Naive thymus-derived CD4-positive, alpha-beta T cell (primary cell): ENCODE measurements at regions of chrX and their contacts with region 1.

Region 1: GRCh38 chrX:13653022-13653693 is at the start of gene TCEANC:
- DNase-seq: peak; percentile 77 to 96 (median 93)
- ATAC-seq: peak; percentile 97
- H3K4me3 ChIP-seq: peak within 1 kb of the TSS; percentile 93
- H3K4me3 Mint-ChIP-seq: peak within 1 kb of the TSS; percentile 79 to 96 (median 93)
- H3K27ac ChIP-seq: peak within 1 kb of the TSS; percentile 93
- H3K27ac Mint-ChIP-seq: peak within 1 kb of the TSS; percentile 91 to 98 (median 96)
- H3K4me1 ChIP-seq: peaks cover 15 to 16% of the 10 kb centered on the region in 2 donors
- H3K4me1 Mint-ChIP-seq: peaks cover 0 to 39% (median 24%) of the 10 kb centered on the region in 7 donors
- H3K27me3 ChIP-seq: no peaks in the 10 kb centered on the region
- H3K27me3 Mint-ChIP-seq: no peaks in the 10 kb centered on the region
- total RNA-seq, gene TCEANC: 5.0 to 17.5 (median 11.4) TPM

Region 2: GRCh38 chrX:12791257-12792228 is 861.6 kb before region 1 on chrX and contains the start of gene PRPS2:
- CTCF ChIA-PET with region 1: no interaction called
- POLR2A ChIA-PET with region 1: no interaction called
- intact Hi-C with region 1: loop called (anchors 2 to 5 kb)
- DNase-seq: peak; percentile 39 to 74 (median 69)
- ATAC-seq: peak; percentile 96
- H3K4me3 ChIP-seq: peak within 1 kb of the TSS; percentile 74
- H3K4me3 Mint-ChIP-seq: peak within 1 kb of the TSS; percentile 85 to 92 (median 88)
- H3K27ac ChIP-seq: peak within 1 kb of the TSS; percentile 73
- H3K27ac Mint-ChIP-seq: peak within 1 kb of the TSS; percentile 59 to 86 (median 81)
- H3K4me1 ChIP-seq: peaks cover 0 to 6% of the 10 kb centered on the region in 2 donors
- H3K4me1 Mint-ChIP-seq: peaks cover 8 to 44% (median 34%) of the 10 kb centered on the region in 7 donors
- H3K27me3 ChIP-seq: no peaks in the 10 kb centered on the region
- H3K27me3 Mint-ChIP-seq: peaks cover 0 to 16% (median 0%) of the 10 kb centered on the region in 5 donors
- total RNA-seq, gene PRPS2: 24.7 to 95.8 (median 32.0) TPM

Region 3: DNA sequence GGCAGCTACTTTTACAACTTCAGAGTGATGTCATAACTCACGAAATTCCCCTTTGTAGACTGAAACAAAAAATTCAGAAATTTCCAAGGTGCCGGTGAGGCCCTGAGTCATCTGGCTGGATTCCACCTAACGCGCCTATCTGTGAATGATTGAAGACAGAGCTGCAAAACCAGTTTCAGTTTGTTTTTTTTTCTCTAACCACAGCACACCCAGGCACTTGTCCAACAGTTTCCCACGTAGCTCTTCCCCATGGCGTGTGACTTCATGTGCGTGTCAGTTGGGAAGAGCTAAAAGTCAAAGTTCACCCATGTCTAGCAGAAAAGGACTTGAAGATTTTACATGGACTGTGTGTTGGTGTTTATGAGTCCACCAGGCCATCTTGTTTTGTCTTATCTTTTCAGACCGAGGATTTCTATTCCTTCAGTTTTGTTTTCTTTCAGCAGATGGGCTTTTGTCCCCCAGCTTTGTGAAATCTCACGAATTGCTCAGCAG is 16.1 kb after region 1 on chrX:
- CTCF ChIA-PET with region 1: no interaction called
- POLR2A ChIA-PET with region 1: interaction called, 3 read pairs
- intact Hi-C with region 1: loop called in 1 of 2 experiments (anchors 1 kb)
- DNase-seq: peak in 2 of 9 donors; percentile 36 to 62
- ATAC-seq: peak; percentile 90
- H3K4me3 ChIP-seq: no peak overlapping the region
- H3K4me3 Mint-ChIP-seq: peak overlapping the region in 3 of 10 donors; percentile 16 to 46 (median 30)
- H3K27ac ChIP-seq: no peak overlapping the region
- H3K27ac Mint-ChIP-seq: peak overlapping the region in 4 of 9 donors; percentile 14 to 77 (median 70)
- H3K4me1 ChIP-seq: no peaks in the 10 kb centered on the region
- H3K4me1 Mint-ChIP-seq: peaks cover 0 to 4% (median 0%) of the 10 kb centered on the region in 7 donors
- H3K27me3 ChIP-seq: no peaks in the 10 kb centered on the region
- H3K27me3 Mint-ChIP-seq: no peaks in the 10 kb centered on the region

Region 4: DNA sequence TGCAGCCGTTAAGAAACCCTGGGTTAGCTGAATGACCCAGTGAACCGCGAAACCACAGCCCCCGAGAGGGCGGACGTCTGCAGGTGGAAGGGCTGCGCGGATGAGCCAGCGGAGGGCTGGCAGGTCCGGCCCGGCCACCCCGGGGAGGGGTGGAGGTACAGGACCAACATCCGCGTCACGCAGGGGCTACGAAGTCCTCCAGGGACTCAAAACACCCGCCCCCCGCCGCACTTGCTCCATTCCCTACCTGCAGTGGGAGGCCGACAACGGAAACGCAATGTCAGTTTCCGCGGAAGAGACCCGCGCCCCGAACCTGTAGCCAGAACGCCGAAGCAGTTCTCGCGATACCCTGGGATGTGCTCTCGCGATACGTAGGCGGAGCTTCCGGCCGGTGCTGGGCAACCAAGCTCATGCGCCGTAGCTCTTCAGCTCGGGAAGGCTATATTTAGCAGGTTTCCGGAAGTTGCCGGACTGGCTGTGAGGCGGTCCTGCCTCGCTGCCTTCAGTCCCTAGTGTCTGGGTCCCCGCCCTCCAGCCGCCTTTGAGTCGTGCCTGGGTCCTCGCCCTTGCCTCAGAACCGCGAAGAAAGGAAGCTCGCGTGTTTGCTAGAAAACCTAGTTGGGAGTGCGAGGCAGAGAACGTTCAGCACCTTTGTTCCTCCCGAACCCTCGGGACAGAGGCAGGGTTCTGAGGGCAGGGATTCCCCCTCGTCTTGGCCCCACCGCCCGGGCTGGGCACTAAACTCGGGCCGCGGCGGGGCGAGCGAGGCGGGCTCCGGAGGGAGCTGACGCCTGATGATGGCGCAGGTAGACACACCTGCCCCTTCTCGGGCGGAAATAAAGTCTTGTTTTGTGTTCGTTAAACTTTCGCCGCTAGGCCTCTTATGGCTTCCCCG is 81.4 kb after region 1 on chrX and contains the starts of genes OFD1 and TRAPPC2:
- CTCF ChIA-PET with region 1: no interaction called
- POLR2A ChIA-PET with region 1: interaction called, 11 read pairs
- intact Hi-C with region 1: loop called (anchors 1 kb)
- DNase-seq: peak; percentile 76 to 92 (median 87)
- ATAC-seq: peak; percentile 94
- H3K4me3 ChIP-seq: peak within 1 kb of the TSS; percentile 85
- H3K4me3 Mint-ChIP-seq: peak within 1 kb of the TSS; percentile 82 to 99 (median 94)
- H3K27ac ChIP-seq: peak within 1 kb of the TSS; percentile 99
- H3K27ac Mint-ChIP-seq: peak within 1 kb of the TSS; percentile 95 to 99 (median 97)
- H3K4me1 ChIP-seq: peaks cover 12 to 20% of the 10 kb centered on the region in 2 donors
- H3K4me1 Mint-ChIP-seq: peaks cover 21 to 66% (median 58%) of the 10 kb centered on the region in 7 donors
- H3K27me3 ChIP-seq: no peaks in the 10 kb centered on the region
- H3K27me3 Mint-ChIP-seq: no peaks in the 10 kb centered on the region
- total RNA-seq, gene OFD1: 30.4 to 142 (median 72.5) TPM
- total RNA-seq, gene TRAPPC2: 20.7 to 31.1 (median 23.5) TPM

Region 5: DNA sequence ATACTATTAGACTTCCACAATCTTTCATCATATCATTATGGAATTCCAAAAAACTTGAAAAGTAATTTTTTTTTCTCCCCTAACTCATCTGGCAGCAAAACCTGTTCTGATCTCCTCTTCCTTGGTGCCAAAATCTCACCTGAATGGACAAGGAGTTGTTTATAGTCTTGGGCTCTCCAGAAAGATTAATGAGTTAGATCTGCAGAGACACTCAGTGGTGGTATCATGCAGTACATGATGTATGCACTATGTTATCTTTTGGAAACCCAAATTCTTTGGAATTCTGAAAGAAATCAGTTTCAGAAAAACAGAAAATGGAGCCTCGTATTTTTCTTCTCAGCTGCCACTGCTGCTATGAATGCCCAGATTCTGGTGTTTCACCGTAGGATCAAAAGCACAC is 152.1 kb after region 1 on chrX:
- CTCF ChIA-PET with region 1: no interaction called
- POLR2A ChIA-PET with region 1: no interaction called
- intact Hi-C with region 1: no loop called
- DNase-seq: no peak
- ATAC-seq: no peak
- H3K4me3 ChIP-seq: no peak overlapping the region
- H3K4me3 Mint-ChIP-seq: no peak overlapping the region
- H3K27ac ChIP-seq: no peak overlapping the region
- H3K27ac Mint-ChIP-seq: no peak overlapping the region
- H3K4me1 ChIP-seq: no peaks in the 10 kb centered on the region
- H3K4me1 Mint-ChIP-seq: no peaks in the 10 kb centered on the region
- H3K27me3 ChIP-seq: no peaks in the 10 kb centered on the region
- H3K27me3 Mint-ChIP-seq: peaks cover 0 to 5% (median 0%) of the 10 kb centered on the region in 5 donors

Region 6: GRCh38 chrX:14872851-14873675 is 1219.9 kb after region 1 on chrX and contains the starts of genes FANCB and MOSPD2:
- CTCF ChIA-PET with region 1: interaction called, 3 read pairs
- POLR2A ChIA-PET with region 1: no interaction called
- intact Hi-C with region 1: loop called in 1 of 2 experiments (anchors 1 kb)
- DNase-seq: peak; percentile 83 to 96 (median 93)
- ATAC-seq: peak; percentile 95
- H3K4me3 ChIP-seq: peak within 1 kb of the TSS; percentile 76
- H3K4me3 Mint-ChIP-seq: peak within 1 kb of the TSS; percentile 82 to 94 (median 88)
- H3K27ac ChIP-seq: peak within 1 kb of the TSS; percentile 76
- H3K27ac Mint-ChIP-seq: peak within 1 kb of the TSS; percentile 75 to 93 (median 88)
- H3K4me1 ChIP-seq: peaks cover 4 to 9% of the 10 kb centered on the region in 2 donors
- H3K4me1 Mint-ChIP-seq: peaks cover 0 to 34% (median 14%) of the 10 kb centered on the region in 7 donors
- H3K27me3 ChIP-seq: no peaks in the 10 kb centered on the region
- H3K27me3 Mint-ChIP-seq: no peaks in the 10 kb centered on the region
- total RNA-seq, gene FANCB: 3.3 to 8.3 (median 4.0) TPM
- total RNA-seq, gene MOSPD2: 7.1 to 15.7 (median 13.4) TPM